Activated CD4-positive, alpha-beta T cell treated with anti-CD3 and anti-CD28 coated beads for 36 hours (primary cell): ENCODE measurements at regions of chr4 and their contacts with region 1.

Region 1: GRCh38 chr4:89434364-89434988 is 126.9 kb upstream of the GPRIN3 start:
- DNase-seq: no peak
- ATAC-seq: peak; percentile 75
- H3K4me3 Mint-ChIP-seq: no peak overlapping the region
- H3K27ac Mint-ChIP-seq: no peak overlapping the region
- H3K4me1 Mint-ChIP-seq: peaks cover 21% of the 10 kb centered on the region
- H3K27me3 Mint-ChIP-seq: peaks cover 2% of the 10 kb centered on the region

Region 2: DNA sequence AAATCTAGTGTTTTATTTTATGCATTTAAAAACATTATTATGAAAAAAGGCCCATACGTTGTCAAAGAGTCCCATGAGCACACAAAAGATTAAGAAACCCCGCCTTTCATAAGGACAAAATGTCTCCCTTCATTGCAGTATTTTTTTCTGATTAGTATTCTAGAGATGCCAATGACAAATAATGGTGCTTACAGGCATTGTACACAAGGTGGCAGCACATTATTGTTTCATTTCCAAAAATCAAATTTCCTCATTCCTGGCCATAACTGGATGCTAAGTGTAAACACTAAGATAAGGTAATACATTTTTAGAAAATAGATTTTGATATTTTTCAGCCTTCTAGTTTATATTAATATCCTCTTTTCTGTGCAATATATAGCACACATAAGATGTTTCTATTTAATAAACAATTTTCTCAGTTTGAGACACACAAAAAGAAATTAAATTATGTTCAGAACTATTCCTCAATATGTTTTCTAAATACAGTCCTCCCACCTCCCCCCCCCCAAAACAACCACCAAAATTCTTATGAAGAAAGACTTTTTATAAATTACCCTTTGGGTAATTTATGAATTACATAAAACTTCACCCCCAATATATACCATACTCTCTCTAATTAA is 275.5 kb before region 1 on chr4:
- CTCF ChIA-PET with region 1: interaction called, 7 read pairs
- POLR2A ChIA-PET with region 1: no interaction called
- intact Hi-C with region 1: loop called (anchors 1 kb)
- DNase-seq: no peak
- ATAC-seq: no peak
- H3K4me3 Mint-ChIP-seq: no peak overlapping the region
- H3K27ac Mint-ChIP-seq: no peak overlapping the region
- H3K4me1 Mint-ChIP-seq: no peaks in the 10 kb centered on the region
- H3K27me3 Mint-ChIP-seq: peaks cover 5% of the 10 kb centered on the region

Region 3: GRCh38 chr4:89254847-89255246 is 179.6 kb before region 1 on chr4:
- CTCF ChIA-PET with region 1: interaction called, 3 read pairs
- POLR2A ChIA-PET with region 1: no interaction called
- intact Hi-C with region 1: loop called in 1 of 2 experiments (anchors 1 kb)
- DNase-seq: peak; percentile 64
- ATAC-seq: peak; percentile 72
- H3K4me3 Mint-ChIP-seq: no peak overlapping the region
- H3K27ac Mint-ChIP-seq: peak overlapping the region; percentile 44
- H3K4me1 Mint-ChIP-seq: peaks cover 71% of the 10 kb centered on the region
- H3K27me3 Mint-ChIP-seq: no peaks in the 10 kb centered on the region

Region 4: DNA sequence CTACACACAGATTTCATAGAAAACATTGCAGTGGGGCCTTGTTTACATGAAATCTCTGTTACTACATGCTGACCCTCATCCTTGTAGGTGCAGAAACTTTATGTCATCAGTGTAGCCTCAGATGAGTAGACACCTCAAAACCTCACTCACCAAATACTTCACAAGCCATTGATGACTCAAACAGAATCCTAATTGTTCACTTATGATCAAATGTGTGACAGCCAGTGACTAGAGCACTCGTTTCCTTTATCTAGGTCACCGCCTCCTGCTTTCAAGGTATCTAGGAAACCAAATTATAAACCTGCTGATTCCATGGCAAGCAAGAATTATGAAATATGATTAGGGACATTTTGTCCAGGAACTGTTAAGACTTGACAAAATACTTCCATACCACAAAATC is 129.0 kb after region 1 on chr4:
- CTCF ChIA-PET with region 1: no interaction called
- POLR2A ChIA-PET with region 1: no interaction called
- intact Hi-C with region 1: loop called in 1 of 2 experiments (anchors 5 kb)
- DNase-seq: no peak
- ATAC-seq: peak; percentile 88
- H3K4me3 Mint-ChIP-seq: no peak overlapping the region
- H3K27ac Mint-ChIP-seq: no peak overlapping the region
- H3K4me1 Mint-ChIP-seq: peaks cover 8% of the 10 kb centered on the region
- H3K27me3 Mint-ChIP-seq: peaks cover 5% of the 10 kb centered on the region

Region 5: GRCh38 chr4:89906777-89907521 is 472.5 kb after region 1 on chr4:
- CTCF ChIA-PET with region 1: interaction called, 4 read pairs
- POLR2A ChIA-PET with region 1: no interaction called
- intact Hi-C with region 1: loop called in 1 of 2 experiments (anchors 5 kb)
- DNase-seq: no peak
- ATAC-seq: peak; percentile 93
- H3K4me3 Mint-ChIP-seq: no peak overlapping the region
- H3K27ac Mint-ChIP-seq: no peak overlapping the region
- H3K4me1 Mint-ChIP-seq: peaks cover 2% of the 10 kb centered on the region
- H3K27me3 Mint-ChIP-seq: no peaks in the 10 kb centered on the region